Heart right ventricle (tissue), 16 donors: ENCODE measurements at regions of chr21 and their contacts with region 1.

Region 1: DNA sequence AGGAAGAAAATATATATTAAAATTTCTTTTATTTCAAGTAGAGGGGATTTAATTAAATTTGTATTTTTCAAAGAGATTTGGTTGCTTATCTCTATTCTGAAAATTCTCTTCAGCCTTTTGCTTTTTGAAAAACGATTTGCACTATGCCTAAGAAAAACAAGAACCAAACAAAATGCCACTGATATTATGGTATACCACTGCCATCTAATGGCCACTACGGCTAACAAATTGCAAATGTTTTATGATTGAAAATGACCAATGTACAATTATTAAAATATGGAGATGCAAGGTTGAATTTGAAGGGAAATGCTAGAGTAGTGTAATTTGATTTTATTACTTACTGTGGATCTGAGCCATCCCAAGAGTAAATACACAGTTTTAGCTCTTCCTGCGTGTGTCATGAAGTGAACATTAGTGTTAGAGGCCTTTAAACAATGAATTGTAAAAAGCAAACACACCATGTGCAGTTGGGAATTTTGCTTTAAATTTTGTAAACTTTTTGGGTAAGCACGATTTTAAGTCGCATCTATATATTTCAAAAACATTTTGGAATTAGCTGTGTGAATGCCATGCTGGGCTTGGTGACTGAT is 137.4 kb upstream of the USP25 start:
- DNase-seq: no peak
- ATAC-seq: peak in 1 of 8 donors; percentile 47
- H3K4me3 ChIP-seq: no peak overlapping the region
- H3K27ac ChIP-seq: no peak overlapping the region
- H3K4me1 ChIP-seq: no peaks in the 10 kb centered on the region
- H3K27me3 ChIP-seq: peaks cover 0 to 5% (median 0%) of the 10 kb centered on the region in 7 donors
- CTCF ChIP-seq: peak; percentile 25 to 72 (median 59)

Region 2: GRCh38 chr21:14251336-14251735 is 1341.0 kb before region 1 on chr21:
- intact Hi-C with region 1: loop called in 6 of 10 experiments (anchors 5 to 10 kb)
- DNase-seq: no peak
- ATAC-seq: no peak
- H3K4me3 ChIP-seq: no peak overlapping the region
- H3K27ac ChIP-seq: no peak overlapping the region
- H3K4me1 ChIP-seq: peaks cover 0 to 4% (median 0%) of the 10 kb centered on the region in 9 donors
- H3K27me3 ChIP-seq: peaks cover 0 to 7% (median 3%) of the 10 kb centered on the region in 7 donors
- CTCF ChIP-seq: no peak

Region 3: GRCh38 chr21:14259747-14260146 is 1332.6 kb before region 1 on chr21:
- intact Hi-C with region 1: loop called in 7 of 10 experiments (anchors 5 to 10 kb)
- DNase-seq: no peak
- ATAC-seq: peak in 3 of 8 donors; percentile 57 to 63 (median 61)
- H3K4me3 ChIP-seq: no peak overlapping the region
- H3K27ac ChIP-seq: no peak overlapping the region
- H3K4me1 ChIP-seq: no peaks in the 10 kb centered on the region
- H3K27me3 ChIP-seq: peaks cover 0 to 7% (median 0%) of the 10 kb centered on the region in 7 donors
- CTCF ChIP-seq: peak in 8 of 9 donors; percentile 27 to 69 (median 59)

Region 4: GRCh38 chr21:14403681-14404318 is 1188.6 kb before region 1 on chr21:
- intact Hi-C with region 1: loop called in 6 of 10 experiments (anchors 5 to 10 kb)
- DNase-seq: no peak
- ATAC-seq: no peak
- H3K4me3 ChIP-seq: no peak overlapping the region
- H3K27ac ChIP-seq: no peak overlapping the region
- H3K4me1 ChIP-seq: no peaks in the 10 kb centered on the region
- H3K27me3 ChIP-seq: no peaks in the 10 kb centered on the region
- CTCF ChIP-seq: peak in 8 of 9 donors; percentile 14 to 72 (median 58)

Region 5: DNA sequence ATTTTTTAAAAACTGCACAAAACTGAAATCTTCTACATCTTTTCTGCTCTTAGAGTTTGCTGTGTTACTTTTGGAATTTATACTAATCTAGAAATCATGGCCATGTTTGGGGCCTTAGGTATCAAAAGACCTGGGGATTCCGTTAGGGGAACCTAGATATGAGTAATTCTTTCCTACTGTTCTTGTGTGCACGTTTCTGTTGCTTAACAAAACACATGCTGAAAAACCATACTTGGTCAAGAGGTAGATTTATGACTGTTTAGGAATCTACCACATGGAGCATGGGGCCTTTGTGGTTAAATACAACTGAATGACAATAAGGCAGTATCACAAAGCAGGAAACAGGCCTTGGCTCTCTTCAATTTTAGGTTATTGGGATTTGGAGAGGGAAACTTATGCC is 154.5 kb before region 1 on chr21:
- intact Hi-C with region 1: no loop called
- DNase-seq: no peak
- ATAC-seq: no peak
- H3K4me3 ChIP-seq: no peak overlapping the region
- H3K27ac ChIP-seq: no peak overlapping the region
- H3K4me1 ChIP-seq: peaks cover 0 to 5% (median 0%) of the 10 kb centered on the region in 9 donors
- H3K27me3 ChIP-seq: no peaks in the 10 kb centered on the region
- CTCF ChIP-seq: no peak